AG04450 (cell line): ENCODE measurements at regions of chr11 and their contacts with region 1.

Region 1: DNA sequence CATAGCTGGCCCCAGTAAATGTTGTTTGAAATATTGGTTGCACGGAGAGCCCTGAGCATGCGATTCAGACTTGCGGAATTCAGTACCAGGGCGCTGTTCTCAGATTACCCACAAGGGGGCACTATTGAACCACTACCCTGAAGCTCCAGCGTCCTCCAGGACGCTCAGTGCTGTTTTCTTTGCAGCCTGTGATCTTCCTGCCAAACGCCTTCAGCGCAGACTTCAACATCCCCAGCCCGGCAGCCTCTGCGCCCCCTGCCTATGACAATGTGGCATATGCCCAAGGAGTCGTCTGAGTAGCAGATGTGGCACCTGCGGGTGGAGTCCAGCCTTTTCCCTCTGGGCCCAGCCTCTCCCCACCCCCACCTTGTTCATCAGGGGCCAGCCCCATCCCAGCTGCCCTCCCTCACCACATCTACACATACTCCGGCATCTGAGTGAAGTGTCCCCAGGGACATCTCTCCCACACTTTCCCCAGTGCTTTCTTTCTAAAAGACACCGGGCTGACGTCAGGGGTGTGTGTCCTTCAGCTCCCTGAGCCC is 9.6 kb upstream of the MS4A10 start:
- DNase-seq: peak; percentile 81
- H3K4me3 ChIP-seq: no peak overlapping the region
- H3K27ac ChIP-seq: no peak overlapping the region
- H3K27me3 ChIP-seq: peaks cover 3% of the 10 kb centered on the region
- CTCF ChIP-seq: peak; percentile 91

Region 2: DNA sequence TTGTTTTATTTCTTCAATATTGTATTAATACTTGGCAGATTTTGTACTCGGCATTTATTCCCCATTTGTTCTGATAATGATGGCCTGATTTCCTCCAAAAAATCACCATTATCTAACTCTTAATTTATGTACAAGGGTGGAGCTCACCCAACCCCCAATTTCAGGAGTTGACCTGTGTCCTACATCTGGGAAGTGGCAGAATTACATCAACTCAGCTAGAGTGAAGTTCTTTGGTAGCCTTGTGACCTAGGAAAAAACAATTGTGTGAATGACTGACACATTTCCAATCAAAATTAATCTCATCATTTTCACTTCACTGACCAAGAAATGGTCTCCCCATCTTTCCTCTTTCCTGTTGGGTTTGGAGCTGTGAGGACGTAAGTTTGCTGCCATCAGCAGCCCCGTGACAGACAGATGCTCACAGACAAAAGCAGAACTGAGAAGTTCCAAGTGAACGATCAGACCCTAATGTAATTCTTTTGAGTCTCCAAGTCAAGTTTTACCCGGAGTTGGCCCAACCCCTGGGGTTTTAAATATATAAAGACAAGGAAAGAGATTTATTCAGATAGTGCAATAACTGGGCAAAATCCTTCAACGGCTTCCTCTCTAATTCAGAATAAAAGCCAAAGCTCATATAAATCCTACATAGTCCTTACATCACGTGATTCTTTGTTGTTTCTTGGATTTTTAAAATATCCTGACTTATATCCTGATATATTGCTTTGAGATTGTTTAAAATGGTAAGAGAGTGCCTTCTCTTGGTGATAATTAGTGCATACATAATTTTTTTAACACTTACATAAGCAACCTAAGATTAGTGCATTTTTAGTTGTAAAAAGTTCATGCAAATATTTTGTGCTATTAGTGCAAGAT is 464.8 kb before region 1 on chr11:
- CTCF ChIA-PET with region 1: no interaction called
- POLR2A ChIA-PET with region 1: no interaction called
- DNase-seq: no peak
- H3K4me3 ChIP-seq: no peak overlapping the region
- H3K27ac ChIP-seq: no peak overlapping the region
- H3K27me3 ChIP-seq: no peaks in the 10 kb centered on the region
- CTCF ChIP-seq: no peak

Region 3: DNA sequence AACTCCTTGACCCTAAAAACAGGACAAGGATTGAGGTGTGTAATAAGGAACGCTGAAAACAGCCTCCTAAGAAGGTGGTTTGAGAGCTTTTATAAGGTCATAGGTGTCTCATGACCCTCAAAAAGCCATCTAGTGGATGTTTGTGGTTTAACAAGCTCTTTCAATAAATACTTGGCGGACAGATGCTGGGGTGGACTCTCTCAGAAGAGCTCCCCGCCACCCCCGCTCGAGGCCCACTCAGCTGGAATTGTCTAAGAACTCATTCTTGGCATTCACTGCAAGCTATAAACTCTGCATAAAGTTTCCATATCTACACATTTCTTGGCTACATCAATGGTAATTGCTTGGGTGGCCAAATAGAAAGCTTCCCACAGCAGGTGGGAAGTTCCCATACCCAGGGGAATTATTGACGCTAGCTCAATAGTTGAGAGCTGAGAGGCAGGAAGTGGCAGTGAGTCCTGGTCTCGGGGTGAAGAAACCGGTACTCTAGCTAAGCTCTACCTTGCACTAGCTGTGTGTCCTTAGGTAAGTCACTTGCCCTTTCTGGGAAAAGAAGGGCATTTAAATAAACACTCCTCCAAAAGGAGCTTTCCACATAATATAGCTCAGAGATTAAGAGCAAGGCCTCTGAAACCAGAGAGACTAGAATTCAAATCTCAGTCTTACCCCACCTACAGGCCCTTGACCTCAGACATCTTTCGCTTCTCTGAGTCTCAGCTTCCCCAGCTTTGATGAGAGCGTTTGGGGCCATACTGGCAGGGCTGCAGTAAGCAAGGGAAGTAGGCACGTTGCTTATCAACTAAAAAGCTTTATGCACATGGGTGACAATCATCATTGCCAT is 12.4 kb before region 1 on chr11:
- CTCF ChIA-PET with region 1: interaction called, 13 read pairs
- POLR2A ChIA-PET with region 1: interaction called, 6 read pairs
- DNase-seq: no peak
- H3K4me3 ChIP-seq: no peak overlapping the region
- H3K27ac ChIP-seq: no peak overlapping the region
- H3K27me3 ChIP-seq: no peaks in the 10 kb centered on the region
- CTCF ChIP-seq: peak; percentile 25; the same call in 1 of the 2 replicates

Region 4: GRCh38 chr11:60786811-60787567 is 11.5 kb after region 1 on chr11:
- CTCF ChIA-PET with region 1: interaction called, 28 read pairs
- POLR2A ChIA-PET with region 1: no interaction called
- DNase-seq: peak; percentile 38
- H3K4me3 ChIP-seq: no peak overlapping the region
- H3K27ac ChIP-seq: no peak overlapping the region
- H3K27me3 ChIP-seq: peaks cover 7% of the 10 kb centered on the region
- CTCF ChIP-seq: no peak